Psoas muscle (tissue), 8 donors: ENCODE measurements at regions of chr1 and their contacts with region 1.

Region 1: DNA sequence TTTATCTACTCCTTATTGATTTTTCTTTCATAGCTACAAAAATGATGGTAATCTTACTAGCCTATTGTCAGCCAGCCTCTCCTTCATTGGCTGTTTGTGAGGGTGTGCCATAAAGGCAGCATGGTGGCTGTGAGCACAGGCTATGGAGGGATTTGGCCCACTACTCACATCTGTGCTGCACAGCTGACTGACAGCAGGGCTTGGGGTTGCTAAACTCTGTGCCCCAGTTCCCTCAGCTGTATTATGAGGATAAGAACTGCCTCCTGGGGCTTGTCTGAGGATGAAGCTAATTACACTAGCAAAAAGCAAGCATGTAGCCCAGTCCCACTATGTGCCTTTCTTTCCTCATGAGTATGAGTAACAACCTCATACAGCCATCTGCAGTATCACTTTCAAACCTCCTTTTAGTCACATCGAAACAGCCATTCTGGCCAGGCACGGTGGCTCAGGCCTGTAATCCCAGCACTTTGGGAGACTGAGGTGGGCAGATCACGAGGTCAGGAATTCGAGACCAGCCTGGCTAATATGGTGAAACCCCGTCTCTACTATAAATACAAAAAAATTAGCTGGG is 66.2 kb downstream of the COQ8A start:
- DNase-seq: no peak
- ATAC-seq: no peak
- H3K4me3 ChIP-seq: no peak overlapping the region
- H3K27ac ChIP-seq: no peak overlapping the region
- H3K4me1 ChIP-seq: no peaks in the 10 kb centered on the region
- H3K27me3 ChIP-seq: no peaks in the 10 kb centered on the region
- CTCF ChIP-seq: no peak

Region 2: GRCh38 chr1:227131193-227131592 is 124.9 kb after region 1 on chr1:
- intact Hi-C with region 1: loop called in 1 of 2 experiments (anchors 10 kb)
- DNase-seq: no peak
- ATAC-seq: peak in 2 of 4 donors; percentile 57 to 63
- H3K4me3 ChIP-seq: no peak overlapping the region
- H3K27ac ChIP-seq: no peak overlapping the region
- H3K4me1 ChIP-seq: no peaks in the 10 kb centered on the region
- H3K27me3 ChIP-seq: no peaks in the 10 kb centered on the region
- CTCF ChIP-seq: peak; percentile 49